ENCODE measurements at regions of chrX and their contacts with region 1.

Region 1: GRCh38 chrX:51860679-51861078 is 32.7 kb upstream of the MAGED1 start:
- DNase-seq: peak; percentile 30 to 36
- H3K4me3 ChIP-seq: no peak overlapping the region
- H3K4me3 Mint-ChIP-seq: no peak overlapping the region
- H3K27ac Mint-ChIP-seq: no peak overlapping the region
- H3K4me1 ChIP-seq: no peaks in the 10 kb centered on the region
- H3K4me1 Mint-ChIP-seq: peaks cover 8% of the 10 kb centered on the region
- H3K27me3 ChIP-seq: no peaks in the 10 kb centered on the region
- H3K27me3 Mint-ChIP-seq: no peaks in the 10 kb centered on the region
- CTCF ChIP-seq: peak; percentile 27 to 48

Region 2: GRCh38 chrX:51487960-51488267 is 372.8 kb before region 1 on chrX:
- CTCF ChIA-PET with region 1: no interaction called
- POLR2A ChIA-PET with region 1: no interaction called
- intact Hi-C with region 1: loop called (anchors 2 kb)
- DNase-seq: no peak
- H3K4me3 ChIP-seq: no peak overlapping the region
- H3K4me3 Mint-ChIP-seq: no peak overlapping the region
- H3K27ac Mint-ChIP-seq: no peak overlapping the region
- H3K4me1 ChIP-seq: no peaks in the 10 kb centered on the region
- H3K4me1 Mint-ChIP-seq: no peaks in the 10 kb centered on the region
- H3K27me3 ChIP-seq: no peaks in the 10 kb centered on the region
- H3K27me3 Mint-ChIP-seq: peaks cover 4% of the 10 kb centered on the region
- CTCF ChIP-seq: no peak

Region 3: GRCh38 chrX:51759055-51759839 is 101.4 kb before region 1 on chrX:
- CTCF ChIA-PET with region 1: no interaction called
- POLR2A ChIA-PET with region 1: no interaction called
- intact Hi-C with region 1: no loop called
- DNase-seq: no peak
- H3K4me3 ChIP-seq: no peak overlapping the region
- H3K4me3 Mint-ChIP-seq: no peak overlapping the region
- H3K27ac Mint-ChIP-seq: no peak overlapping the region
- H3K4me1 ChIP-seq: no peaks in the 10 kb centered on the region
- H3K4me1 Mint-ChIP-seq: no peaks in the 10 kb centered on the region
- H3K27me3 ChIP-seq: no peaks in the 10 kb centered on the region
- H3K27me3 Mint-ChIP-seq: peaks cover 6% of the 10 kb centered on the region
- CTCF ChIP-seq: no peak

Region 4: GRCh38 chrX:51876441-51876840 is 15.8 kb after region 1 on chrX:
- CTCF ChIA-PET with region 1: no interaction called
- POLR2A ChIA-PET with region 1: no interaction called
- intact Hi-C with region 1: no loop called
- DNase-seq: no peak
- H3K4me3 ChIP-seq: no peak overlapping the region
- H3K4me3 Mint-ChIP-seq: no peak overlapping the region
- H3K27ac Mint-ChIP-seq: no peak overlapping the region
- H3K4me1 ChIP-seq: peaks cover 14% of the 10 kb centered on the region
- H3K4me1 Mint-ChIP-seq: peaks cover 7% of the 10 kb centered on the region
- H3K27me3 ChIP-seq: no peaks in the 10 kb centered on the region
- H3K27me3 Mint-ChIP-seq: no peaks in the 10 kb centered on the region
- CTCF ChIP-seq: no peak

Measured in Caco-2 (cell line).